IMR-90 (cell line): ENCODE measurements at regions of chr11 and their contacts with region 1.

Region 1: GRCh38 chr11:122572592-122572991 is 82.9 kb upstream of the UBASH3B start:
- DNase-seq: no peak
- ATAC-seq: peak; percentile 37; the same call in 1 of the 2 replicates
- H3K4me3 ChIP-seq: no peak overlapping the region
- H3K27ac ChIP-seq: no peak overlapping the region
- H3K4me1 ChIP-seq: no peaks in the 10 kb centered on the region
- H3K27me3 ChIP-seq: peaks cover 12% of the 10 kb centered on the region
- CTCF ChIP-seq: no peak
- POLR2A ChIP-seq: no peak
- RAD21 ChIP-seq: no peak

Region 2: DNA sequence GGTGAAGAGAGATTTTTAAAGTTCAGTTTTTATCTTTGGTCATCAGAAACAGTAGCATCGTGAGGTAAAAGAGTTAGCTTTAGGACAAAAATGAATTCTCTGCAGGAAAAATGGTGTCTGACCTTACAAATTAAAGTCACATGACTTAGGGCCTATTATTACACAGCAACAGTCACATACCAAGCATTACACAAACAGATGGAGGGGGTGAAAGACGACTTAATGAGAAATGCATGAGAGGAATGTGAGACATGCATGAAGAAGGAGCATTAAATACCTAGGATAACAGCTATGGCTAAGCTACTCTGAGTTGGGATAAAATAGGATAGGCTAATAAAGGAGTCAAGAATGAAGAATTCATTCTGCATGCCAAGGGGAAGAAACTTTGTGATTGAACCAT is 534.0 kb before region 1 on chr11:
- CTCF ChIA-PET with region 1: no interaction called
- POLR2A ChIA-PET with region 1: no interaction called
- dilution Hi-C with region 1: no loop called
- in situ Hi-C with region 1: no loop called
- intact Hi-C with region 1: no loop called
- DNase-seq: peak; percentile 93
- ATAC-seq: peak; percentile 82
- H3K4me3 ChIP-seq: no peak overlapping the region
- H3K27ac ChIP-seq: peak overlapping the region; percentile 36; the same call in 1 of the 2 replicates
- H3K4me1 ChIP-seq: peaks cover 23% of the 10 kb centered on the region
- H3K27me3 ChIP-seq: no peaks in the 10 kb centered on the region
- CTCF ChIP-seq: no peak
- POLR2A ChIP-seq: no peak
- RAD21 ChIP-seq: no peak

Region 3: DNA sequence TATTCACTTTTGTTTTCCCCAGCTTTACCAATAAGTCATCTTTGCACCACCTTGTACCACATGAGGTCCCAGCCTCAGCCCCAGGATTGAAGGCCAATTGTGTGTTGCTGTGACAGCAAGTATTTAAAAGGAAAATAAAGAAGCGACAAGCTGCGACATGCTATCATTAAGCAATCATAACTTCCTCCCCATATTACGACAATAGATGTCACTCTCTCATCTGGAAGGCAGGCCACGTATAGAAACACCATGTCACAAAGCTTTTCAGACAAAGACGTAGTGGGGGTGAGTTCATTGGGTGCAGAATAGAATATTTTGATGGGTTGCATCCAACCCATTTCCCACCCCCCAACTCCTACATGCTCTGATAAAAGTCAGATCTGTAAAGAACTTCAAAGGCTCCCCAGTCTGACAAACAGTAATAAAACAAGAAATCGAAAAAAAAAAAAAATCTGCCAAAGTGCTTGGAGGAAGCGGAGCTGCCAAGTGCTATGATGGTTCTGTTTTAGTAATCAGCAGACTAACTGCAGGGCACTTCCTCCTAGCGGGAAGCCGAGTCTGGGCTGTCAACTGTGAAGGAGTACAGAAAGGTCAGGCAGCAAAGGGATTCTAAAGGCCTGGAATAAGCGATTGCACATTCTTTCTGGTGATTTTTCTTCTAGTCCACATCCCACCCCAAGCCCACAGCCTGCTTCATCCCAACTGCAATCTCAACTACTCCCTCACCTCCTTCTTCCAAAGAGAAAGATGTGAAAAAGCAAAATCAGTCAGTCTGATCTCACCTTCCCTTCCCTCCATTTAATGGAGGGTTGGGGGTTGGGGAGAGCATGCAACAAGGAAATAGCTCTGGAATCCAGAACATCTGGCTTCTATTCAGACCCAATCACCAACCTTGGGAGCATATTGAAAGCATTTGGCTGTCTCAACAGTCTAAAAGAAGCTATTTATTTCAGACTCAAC is 48.5 kb before region 1 on chr11:
- CTCF ChIA-PET with region 1: no interaction called
- POLR2A ChIA-PET with region 1: no interaction called
- dilution Hi-C with region 1: no loop called
- in situ Hi-C with region 1: no loop called
- intact Hi-C with region 1: no loop called
- DNase-seq: no peak
- ATAC-seq: peak; percentile 77
- H3K4me3 ChIP-seq: no peak overlapping the region
- H3K27ac ChIP-seq: peak overlapping the region; percentile 15; the same call in 1 of the 2 replicates
- H3K4me1 ChIP-seq: no peaks in the 10 kb centered on the region; the same call in 1 of the 2 replicates
- H3K27me3 ChIP-seq: peaks cover 11% of the 10 kb centered on the region
- CTCF ChIP-seq: no peak
- POLR2A ChIP-seq: no peak
- RAD21 ChIP-seq: no peak

Region 4: GRCh38 chr11:122832721-122833470 is 260.3 kb after region 1 on chr11:
- CTCF ChIA-PET with region 1: no interaction called
- POLR2A ChIA-PET with region 1: no interaction called
- dilution Hi-C with region 1: no loop called
- in situ Hi-C with region 1: no loop called
- intact Hi-C with region 1: no loop called
- DNase-seq: no peak
- ATAC-seq: no peak
- H3K4me3 ChIP-seq: no peak overlapping the region
- H3K27ac ChIP-seq: no peak overlapping the region
- H3K4me1 ChIP-seq: no peaks in the 10 kb centered on the region
- H3K27me3 ChIP-seq: peaks cover 9% of the 10 kb centered on the region
- CTCF ChIP-seq: no peak
- POLR2A ChIP-seq: no peak
- RAD21 ChIP-seq: no peak

Region 5: GRCh38 chr11:123006860-123007542 is 434.4 kb after region 1 on chr11:
- CTCF ChIA-PET with region 1: no interaction called
- POLR2A ChIA-PET with region 1: interaction called, 19 read pairs
- dilution Hi-C with region 1: no loop called
- in situ Hi-C with region 1: no loop called
- intact Hi-C with region 1: no loop called
- DNase-seq: no peak
- ATAC-seq: no peak
- H3K4me3 ChIP-seq: no peak overlapping the region
- H3K27ac ChIP-seq: no peak overlapping the region
- H3K4me1 ChIP-seq: no peaks in the 10 kb centered on the region
- H3K27me3 ChIP-seq: peaks cover 24% of the 10 kb centered on the region
- CTCF ChIP-seq: no peak
- POLR2A ChIP-seq: no peak
- RAD21 ChIP-seq: no peak